Kidney (tissue), 22 donors: ENCODE measurements at regions of chr2 and their contacts with region 1.

Region 1: DNA sequence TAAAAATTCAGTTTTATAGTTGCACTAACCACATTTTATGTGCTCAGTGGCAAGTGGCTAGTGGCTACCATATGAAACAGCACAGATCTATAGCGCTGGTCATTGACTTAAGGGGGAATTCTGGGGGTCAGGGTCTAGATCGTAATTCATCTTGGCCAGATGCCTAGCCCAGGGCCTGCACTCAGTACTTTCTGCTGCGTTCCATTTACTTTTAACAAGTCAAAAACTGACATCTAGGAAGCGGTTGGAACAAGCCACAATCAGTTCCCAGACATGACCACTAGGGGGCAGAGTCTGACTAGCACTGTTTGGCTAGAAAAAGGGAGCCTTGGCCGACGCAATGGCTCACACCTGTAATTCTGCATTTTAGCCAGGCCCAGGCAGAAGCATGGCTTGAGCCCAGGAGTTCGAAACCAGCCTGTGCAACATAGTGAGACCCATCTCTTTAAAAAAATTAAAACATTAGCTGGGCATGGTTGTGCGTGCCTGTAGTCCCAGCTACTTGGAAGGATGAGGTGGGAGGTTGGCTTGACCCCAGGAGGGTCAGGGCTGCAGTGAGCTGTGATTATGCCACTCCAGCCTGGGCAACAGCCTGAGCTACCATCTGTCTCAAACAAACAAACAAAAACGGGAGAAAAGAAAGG is 9.0 kb upstream of the TMBIM1 start:
- DNase-seq: peak; percentile 85 to 96 (median 92)
- H3K4me3 ChIP-seq: no peak overlapping the region
- H3K27ac ChIP-seq: no peak overlapping the region
- H3K4me1 ChIP-seq: peaks cover 0 to 3% (median 2%) of the 10 kb centered on the region in 3 donors
- H3K27me3 ChIP-seq: no peaks in the 10 kb centered on the region
- CTCF ChIP-seq: peak; percentile 99

Region 2: DNA sequence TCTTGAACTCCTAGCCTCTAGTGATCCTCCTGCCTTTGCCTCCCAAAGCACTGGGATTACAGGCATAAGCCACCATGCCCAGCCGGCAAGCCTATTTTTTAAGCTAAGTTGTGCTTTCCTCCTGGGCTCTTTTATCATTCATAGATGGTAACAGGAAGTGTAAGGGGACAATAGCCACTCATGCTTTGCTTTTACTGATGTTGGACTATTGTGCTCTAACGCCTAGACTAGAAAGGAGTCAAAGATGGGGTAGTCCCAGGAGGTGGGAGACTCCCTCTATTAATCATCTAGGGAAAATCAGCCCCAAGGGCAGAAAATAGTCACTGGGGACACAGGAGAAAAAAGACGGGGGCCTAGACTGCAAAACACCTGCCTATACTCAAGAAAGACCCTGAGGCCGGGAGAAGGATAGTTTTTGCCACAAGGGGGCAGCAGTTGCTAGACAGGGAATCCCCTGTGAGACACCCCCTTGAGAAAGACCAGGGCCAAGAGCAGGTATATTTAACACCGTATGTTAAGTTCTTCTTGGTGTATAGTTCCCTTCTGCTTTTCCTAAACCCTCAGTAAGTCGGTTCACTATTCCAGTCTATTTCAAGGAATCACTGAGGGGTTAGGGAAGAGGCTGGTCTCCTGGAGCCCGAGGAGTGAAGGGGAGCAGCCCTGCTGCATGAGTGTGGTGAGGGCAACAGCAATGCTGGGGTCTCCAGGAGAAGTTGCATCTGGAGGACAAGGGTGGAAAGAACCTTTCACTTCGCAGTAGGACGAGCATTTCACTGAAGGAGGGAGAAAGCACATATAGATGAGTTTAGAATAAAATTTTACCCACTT is 132.4 kb before region 1 on chr2:
- intact Hi-C with region 1: no loop called
- DNase-seq: peak in 4 of 5 donors; percentile 36 to 66 (median 53)
- H3K4me3 ChIP-seq: no peak overlapping the region
- H3K27ac ChIP-seq: no peak overlapping the region
- H3K4me1 ChIP-seq: no peaks in the 10 kb centered on the region
- H3K27me3 ChIP-seq: no peaks in the 10 kb centered on the region
- CTCF ChIP-seq: peak; percentile 37

Region 3: DNA sequence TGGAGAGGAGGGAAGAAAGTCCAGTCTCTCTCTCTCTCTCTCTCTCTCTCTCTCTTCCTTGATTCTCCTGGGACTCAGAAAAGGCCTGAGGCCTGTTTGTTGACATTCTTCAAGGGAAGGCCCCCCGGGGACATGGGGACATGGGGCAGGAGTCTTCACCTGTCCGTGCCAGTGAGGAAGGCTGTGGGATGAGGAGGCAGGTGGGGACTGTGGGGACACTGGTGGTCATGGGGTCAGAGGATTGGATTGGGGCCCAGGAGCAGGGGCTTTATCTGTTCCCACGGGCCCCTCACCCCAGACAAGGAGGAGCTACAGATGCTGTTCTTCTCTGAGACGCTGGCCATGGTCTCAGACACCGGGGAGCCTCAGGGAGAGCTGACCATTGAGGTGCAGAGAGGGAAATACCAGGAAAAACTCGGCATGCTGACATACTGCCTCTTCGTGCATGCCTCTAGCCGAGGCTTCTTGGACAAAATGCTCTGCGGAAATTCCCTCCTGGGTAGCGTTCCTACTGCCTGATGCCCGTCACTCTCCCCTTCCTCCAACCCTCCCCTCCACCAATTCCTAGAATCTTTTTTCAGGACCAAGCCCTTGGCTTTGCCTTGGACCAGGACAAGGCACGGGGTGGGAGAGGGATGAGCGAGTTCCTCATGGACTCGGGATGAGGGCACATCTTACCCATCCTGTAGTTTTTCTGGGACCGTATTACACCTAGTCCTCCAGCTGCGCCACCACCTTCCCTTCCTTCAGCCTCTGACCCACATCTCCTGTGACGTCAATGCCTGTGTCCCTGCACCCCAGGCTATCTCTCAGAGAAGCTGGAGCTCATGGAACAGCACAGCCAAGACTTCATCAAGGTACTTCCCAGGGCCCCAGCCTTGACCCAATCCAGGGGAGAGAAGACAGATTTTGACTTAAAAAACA is 56.2 kb after region 1 on chr2:
- intact Hi-C with region 1: loop called (anchors 10 kb)
- DNase-seq: peak in 3 of 5 donors; percentile 51 to 70 (median 67)
- H3K4me3 ChIP-seq: peak overlapping the region in 2 of 3 donors; percentile 64 to 71
- H3K27ac ChIP-seq: peak overlapping the region; percentile 90 to 93
- H3K4me1 ChIP-seq: peaks cover 0 to 18% (median 0%) of the 10 kb centered on the region in 3 donors
- H3K27me3 ChIP-seq: no peaks in the 10 kb centered on the region
- CTCF ChIP-seq: no peak